ENCODE measurements at regions of chr17 and their contacts with region 1.

Region 1: GRCh38 chr17:50853015-50853615 is 13.0 kb downstream of the TOB1 start:
- DNase-seq: no peak
- ATAC-seq: no peak
- H3K4me3 Mint-ChIP-seq: no peak overlapping the region
- H3K27ac Mint-ChIP-seq: no peak overlapping the region
- H3K4me1 Mint-ChIP-seq: peaks cover 15% of the 10 kb centered on the region
- H3K27me3 Mint-ChIP-seq: peaks cover 19% of the 10 kb centered on the region

Region 2: GRCh38 chr17:50715471-50715870 is 137.6 kb before region 1 on chr17:
- CTCF ChIA-PET with region 1: no interaction called
- POLR2A ChIA-PET with region 1: no interaction called
- DNase-seq: no peak
- ATAC-seq: no peak
- H3K4me3 Mint-ChIP-seq: no peak overlapping the region
- H3K27ac Mint-ChIP-seq: no peak overlapping the region
- H3K4me1 Mint-ChIP-seq: peaks cover 11% of the 10 kb centered on the region
- H3K27me3 Mint-ChIP-seq: peaks cover 7% of the 10 kb centered on the region

Region 3: GRCh38 chr17:50731575-50732460 is 121.3 kb before region 1 on chr17:
- CTCF ChIA-PET with region 1: no interaction called
- POLR2A ChIA-PET with region 1: no interaction called
- DNase-seq: no peak
- ATAC-seq: no peak
- H3K4me3 Mint-ChIP-seq: no peak overlapping the region
- H3K27ac Mint-ChIP-seq: peak overlapping the region; percentile 35
- H3K4me1 Mint-ChIP-seq: peaks cover 40% of the 10 kb centered on the region
- H3K27me3 Mint-ChIP-seq: no peaks in the 10 kb centered on the region

Region 4: GRCh38 chr17:50817838-50818237 is 35.3 kb before region 1 on chr17:
- CTCF ChIA-PET with region 1: no interaction called
- POLR2A ChIA-PET with region 1: no interaction called
- DNase-seq: no peak
- ATAC-seq: no peak
- H3K4me3 Mint-ChIP-seq: no peak overlapping the region
- H3K27ac Mint-ChIP-seq: no peak overlapping the region
- H3K4me1 Mint-ChIP-seq: peaks cover 29% of the 10 kb centered on the region
- H3K27me3 Mint-ChIP-seq: peaks cover 25% of the 10 kb centered on the region

Region 5: DNA sequence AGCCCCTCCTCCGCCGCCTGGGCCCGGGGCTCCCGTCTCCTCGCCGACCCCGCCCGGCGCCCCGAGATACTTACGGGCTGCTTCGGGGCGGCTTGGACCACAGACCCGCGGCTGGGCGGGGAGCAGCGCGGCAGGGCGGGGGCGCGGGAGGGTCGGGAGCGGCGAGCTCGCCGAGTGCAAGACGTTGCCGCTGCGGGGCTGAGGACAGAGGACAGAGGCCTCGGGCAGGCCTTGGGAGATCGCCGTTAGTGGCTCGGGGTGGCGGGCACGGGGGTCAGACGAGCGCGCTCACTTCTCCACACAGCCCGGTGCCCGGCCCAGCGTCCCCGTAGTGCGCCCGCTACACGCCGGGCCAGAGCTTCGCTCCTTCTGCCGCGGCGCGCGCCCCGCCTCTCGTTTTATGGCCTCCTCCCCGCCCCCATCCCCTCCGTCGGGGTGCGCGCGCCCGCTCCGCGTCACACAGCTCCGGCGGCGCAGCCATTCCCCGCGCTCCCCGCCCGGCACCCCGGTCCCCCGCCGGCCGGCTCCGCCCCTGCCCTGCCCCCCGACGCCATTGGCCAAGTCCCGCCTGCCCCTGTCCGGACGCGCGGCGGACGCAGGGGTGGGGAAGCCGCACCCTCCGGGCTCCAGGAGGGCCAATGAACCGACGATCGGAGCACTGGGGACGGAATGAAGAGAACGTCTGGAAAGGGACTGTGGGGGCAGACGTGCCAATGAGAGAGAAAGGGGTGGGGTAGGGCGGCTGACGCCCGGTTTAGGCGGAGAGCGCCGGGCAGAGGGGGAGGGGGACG is 13.1 kb after region 1 on chr17 and contains the start of gene TOB1:
- CTCF ChIA-PET with region 1: interaction called, 121 read pairs
- POLR2A ChIA-PET with region 1: interaction called, 94 read pairs
- DNase-seq: peak; percentile 96
- ATAC-seq: peak; percentile 73
- H3K4me3 Mint-ChIP-seq: peak within 1 kb of the TSS; percentile 92
- H3K27ac Mint-ChIP-seq: peak within 1 kb of the TSS; percentile 95
- H3K4me1 Mint-ChIP-seq: peaks cover 46% of the 10 kb centered on the region
- H3K27me3 Mint-ChIP-seq: peaks cover 7% of the 10 kb centered on the region
- total RNA-seq, gene TOB1: 44.5 to 47.6 TPM

Region 6: GRCh38 chr17:50904521-50905459 is 51.7 kb after region 1 on chr17:
- CTCF ChIA-PET with region 1: interaction called, 13 read pairs
- POLR2A ChIA-PET with region 1: no interaction called
- DNase-seq: no peak
- ATAC-seq: peak; percentile 27
- H3K4me3 Mint-ChIP-seq: no peak overlapping the region
- H3K27ac Mint-ChIP-seq: peak overlapping the region; percentile 79
- H3K4me1 Mint-ChIP-seq: peaks cover 58% of the 10 kb centered on the region
- H3K27me3 Mint-ChIP-seq: peaks cover 3% of the 10 kb centered on the region

Region 7: DNA sequence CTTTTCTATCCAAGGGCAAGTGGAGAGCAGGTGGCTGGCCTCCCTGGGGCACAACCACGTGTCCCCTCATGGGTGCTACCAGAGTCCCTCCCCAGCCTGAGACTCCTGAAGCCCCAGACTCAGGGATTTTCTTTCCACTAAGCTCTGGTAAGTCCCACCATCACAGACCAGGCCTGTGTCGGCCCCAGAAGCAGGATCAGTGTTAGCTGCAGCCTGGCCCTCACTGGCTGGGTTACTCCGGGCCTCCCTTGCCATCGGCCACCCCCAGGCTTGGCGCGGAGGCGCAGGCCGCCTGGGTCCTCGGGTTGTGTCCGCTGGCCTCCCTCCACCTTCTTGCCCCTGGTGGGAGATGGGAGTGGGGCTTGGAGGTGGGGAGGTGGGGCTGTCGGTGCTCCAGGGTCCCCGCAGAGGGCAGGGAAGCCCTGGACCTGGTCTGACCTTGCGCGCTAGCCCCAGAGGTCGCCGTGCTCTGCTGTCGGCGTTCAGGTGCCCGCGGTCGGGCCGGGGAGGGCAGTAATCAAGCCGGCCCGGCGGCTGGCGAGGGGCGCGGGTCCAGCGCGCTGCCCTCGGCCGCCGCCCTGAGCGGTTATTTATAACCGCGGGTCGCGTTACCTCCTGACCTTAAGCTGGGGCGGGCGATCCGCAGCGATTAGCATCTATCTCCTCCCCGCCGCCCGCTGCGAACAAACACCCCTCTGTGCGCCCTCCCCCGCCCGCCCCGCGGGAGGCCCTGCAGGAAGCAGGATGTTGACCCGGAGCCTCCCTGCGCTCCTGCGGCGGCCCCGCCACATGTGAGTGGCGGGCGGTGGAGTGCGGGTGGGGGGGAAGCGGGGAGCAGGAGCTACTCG is 91.2 kb after region 1 on chr17:
- CTCF ChIA-PET with region 1: interaction called, 351 read pairs
- POLR2A ChIA-PET with region 1: interaction called, 6 read pairs
- DNase-seq: peak; percentile 89
- ATAC-seq: peak; percentile 90
- H3K4me3 Mint-ChIP-seq: peak overlapping the region; percentile 72
- H3K27ac Mint-ChIP-seq: peak overlapping the region; percentile 81
- H3K4me1 Mint-ChIP-seq: peaks cover 41% of the 10 kb centered on the region
- H3K27me3 Mint-ChIP-seq: no peaks in the 10 kb centered on the region

Region 8: DNA sequence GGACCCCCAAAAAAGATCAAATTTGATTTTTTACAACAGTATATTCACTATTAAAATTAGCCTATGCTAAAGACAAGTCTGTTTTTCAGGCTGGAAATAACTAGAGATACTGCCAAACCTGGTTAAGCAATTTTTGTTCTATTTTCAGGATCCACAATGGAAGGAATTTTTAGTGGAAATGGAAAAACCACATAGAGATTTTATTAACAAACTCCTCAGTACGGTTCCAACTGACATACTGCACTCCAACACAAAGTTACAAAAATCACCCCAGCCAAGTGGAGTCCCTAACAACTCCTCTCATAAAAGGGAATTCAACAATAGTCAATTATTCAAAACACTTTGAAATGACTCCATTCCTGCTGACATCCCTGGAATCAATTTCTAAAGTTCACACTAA is 114.7 kb after region 1 on chr17:
- CTCF ChIA-PET with region 1: interaction called, 30 read pairs
- POLR2A ChIA-PET with region 1: no interaction called
- DNase-seq: no peak
- ATAC-seq: no peak
- H3K4me3 Mint-ChIP-seq: no peak overlapping the region
- H3K27ac Mint-ChIP-seq: no peak overlapping the region
- H3K4me1 Mint-ChIP-seq: peaks cover 5% of the 10 kb centered on the region
- H3K27me3 Mint-ChIP-seq: no peaks in the 10 kb centered on the region

Region 9: DNA sequence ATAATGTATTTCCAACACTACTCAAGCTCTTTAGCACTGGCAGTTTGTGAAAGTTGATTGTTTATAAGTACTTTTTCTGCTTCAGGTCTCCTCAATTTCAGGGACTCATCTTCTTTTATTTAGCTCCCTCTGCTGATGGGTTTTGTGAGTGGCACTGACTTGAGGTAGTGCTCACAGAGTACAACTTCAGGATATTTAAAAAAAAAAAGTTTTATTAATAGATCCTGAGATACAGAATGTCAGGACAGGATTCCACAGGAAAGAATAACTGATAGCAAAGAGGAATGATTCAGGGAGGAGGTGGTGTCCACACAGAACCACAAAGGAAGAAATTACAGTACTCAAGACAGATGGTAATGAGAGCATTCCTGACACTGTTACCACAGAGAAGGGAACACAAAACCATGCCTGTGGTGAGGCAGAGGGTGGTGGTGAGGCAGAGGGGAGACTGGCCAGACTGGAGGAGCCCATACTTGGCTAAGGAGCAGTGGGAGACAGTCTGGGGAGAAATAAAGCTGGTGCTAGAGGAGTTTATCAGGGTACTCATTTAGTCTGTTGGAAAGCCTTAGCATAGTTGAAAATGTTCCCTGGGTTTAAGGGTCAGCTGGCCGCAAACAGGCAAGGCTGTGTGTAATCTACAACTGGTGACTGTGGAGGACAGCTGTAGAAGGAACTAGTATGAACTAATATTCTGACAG is 203.8 kb after region 1 on chr17:
- CTCF ChIA-PET with region 1: interaction called, 19 read pairs
- POLR2A ChIA-PET with region 1: no interaction called
- DNase-seq: peak; percentile 54
- ATAC-seq: peak; percentile 57
- H3K4me3 Mint-ChIP-seq: no peak overlapping the region
- H3K27ac Mint-ChIP-seq: no peak overlapping the region
- H3K4me1 Mint-ChIP-seq: peaks cover 6% of the 10 kb centered on the region
- H3K27me3 Mint-ChIP-seq: no peaks in the 10 kb centered on the region

Measured in activated CD8-positive, alpha-beta T cell treated with anti-CD3 and anti-CD28 coated beads, Interleukin-2, amount 10 ng/mL, durations not matched to agents 7 days and 5 days (primary cell).